ENCODE measurements at regions of chr6 and their contacts with region 1.

Region 1: DNA sequence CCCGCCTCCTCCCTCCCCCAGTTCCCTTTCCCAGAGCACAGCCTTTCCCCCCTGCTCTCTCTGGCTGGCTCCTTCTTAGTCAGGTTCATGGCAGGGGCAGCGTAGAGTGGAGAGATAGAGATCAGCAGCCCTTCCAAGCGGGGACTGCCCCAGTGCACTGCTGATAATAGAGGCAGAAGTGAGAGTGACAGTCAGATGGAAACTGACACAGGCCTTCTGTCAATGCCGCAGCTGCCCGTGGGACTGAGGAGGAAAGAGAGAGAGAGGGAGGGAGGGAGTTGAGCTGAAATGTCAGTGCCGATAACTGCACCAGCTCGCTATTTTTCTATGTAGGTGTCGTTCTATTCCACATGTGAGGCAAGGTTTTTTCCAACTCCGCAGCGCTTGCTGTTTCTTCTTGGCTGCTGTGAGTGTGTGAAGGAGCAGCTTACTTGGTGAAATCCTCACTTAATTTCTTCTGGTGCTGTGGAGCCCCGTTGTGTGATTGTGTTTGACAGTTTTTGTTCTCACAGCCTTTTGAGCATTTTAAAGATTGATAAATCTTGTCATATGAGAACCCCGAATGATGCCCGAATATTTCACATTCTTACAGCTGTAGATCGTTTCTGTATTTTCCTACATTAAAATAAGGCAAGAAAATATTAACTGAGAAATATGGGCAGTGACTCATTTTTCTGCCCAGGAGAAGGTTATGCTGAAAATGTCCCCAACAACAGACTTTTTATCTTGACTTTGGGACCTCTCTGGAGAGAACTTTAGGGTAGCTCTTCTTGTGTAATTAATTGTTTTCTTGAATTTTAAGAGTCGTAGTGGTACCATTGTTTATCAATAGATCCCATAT is 386.4 kb upstream of the MMS22L start:
- DNase-seq: peak; percentile 73
- CTCF ChIP-seq: no peak

Region 2: GRCh38 chr6:97177905-97178304 is 491.5 kb before region 1 on chr6:
- CTCF ChIA-PET with region 1: no interaction called
- POLR2A ChIA-PET with region 1: no interaction called
- DNase-seq: no peak
- CTCF ChIP-seq: no peak

Region 3: DNA sequence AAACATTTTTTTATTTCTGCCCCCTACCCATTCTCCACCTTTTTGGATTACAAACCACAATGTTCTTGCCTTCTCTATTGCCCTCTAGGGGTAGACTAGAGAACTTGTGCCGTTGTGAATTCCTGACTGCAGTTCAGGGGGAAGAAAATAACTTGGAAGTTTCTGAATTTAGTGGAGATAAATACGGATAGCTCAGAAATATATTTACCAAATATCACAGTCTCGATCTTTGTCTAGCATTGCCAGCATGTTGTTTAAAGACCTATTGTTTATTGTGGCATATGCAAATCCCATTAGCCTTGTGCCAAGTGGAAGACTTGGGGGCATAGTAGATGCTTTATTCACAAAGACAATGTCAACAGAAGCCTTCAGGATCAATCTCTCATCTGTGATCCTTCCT is 232.3 kb before region 1 on chr6:
- CTCF ChIA-PET with region 1: no interaction called
- POLR2A ChIA-PET with region 1: no interaction called
- DNase-seq: peak; percentile 19
- CTCF ChIP-seq: peak; percentile 32

Region 4: GRCh38 chr6:97689078-97689754 is 19.8 kb after region 1 on chr6:
- CTCF ChIA-PET with region 1: interaction called, 11 read pairs
- POLR2A ChIA-PET with region 1: no interaction called
- DNase-seq: no peak
- CTCF ChIP-seq: no peak